ENCODE measurements at regions of chr5 and their contacts with region 1.

Region 1: DNA sequence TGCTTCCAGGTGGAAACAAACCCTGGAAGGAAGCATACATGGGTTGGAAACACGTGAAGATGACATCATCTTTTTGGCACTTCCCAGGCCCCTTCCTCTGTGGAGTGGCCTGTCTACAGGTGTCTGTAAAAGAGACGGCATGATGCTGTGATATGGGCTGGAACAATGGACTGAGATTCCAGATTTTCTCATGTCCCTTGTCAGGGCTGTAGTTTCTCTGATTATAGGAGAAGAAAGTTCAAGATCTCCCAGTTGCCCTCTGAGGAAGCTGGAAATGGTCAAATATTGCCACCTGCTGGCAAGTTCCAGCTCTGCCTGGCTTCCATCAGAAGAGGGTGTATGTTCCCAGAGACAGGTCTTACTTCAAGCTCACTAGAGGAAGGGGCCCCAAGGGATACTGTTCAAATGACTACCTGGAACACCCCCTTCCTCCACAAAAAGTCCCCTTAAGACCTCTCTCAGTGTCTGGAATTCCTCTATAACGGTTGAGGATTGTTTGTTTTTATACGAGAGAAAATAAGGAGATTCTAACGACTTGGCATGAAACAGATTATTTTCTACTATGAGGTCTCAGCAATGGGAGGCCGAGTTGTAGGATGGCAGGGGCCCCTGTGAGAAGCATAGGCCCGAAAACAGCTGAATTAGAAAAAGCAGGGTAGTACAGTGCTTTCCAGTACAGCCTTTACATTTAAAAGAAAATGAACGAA is 7.3 kb upstream of the ANXA6 start:
- DNase-seq: peak; percentile 50 to 85 (median 81)
- ATAC-seq: peak; percentile 96
- H3K4me3 ChIP-seq: no peak overlapping the region
- H3K4me3 Mint-ChIP-seq: peak overlapping the region in 1 of 10 donors; percentile 51
- H3K27ac ChIP-seq: no peak overlapping the region
- H3K27ac Mint-ChIP-seq: peak overlapping the region in 8 of 9 donors; percentile 20 to 87 (median 54)
- H3K4me1 ChIP-seq: peaks cover 0 to 8% of the 10 kb centered on the region in 2 donors
- H3K4me1 Mint-ChIP-seq: peaks cover 1 to 42% (median 28%) of the 10 kb centered on the region in 7 donors
- H3K27me3 ChIP-seq: no peaks in the 10 kb centered on the region
- H3K27me3 Mint-ChIP-seq: no peaks in the 10 kb centered on the region

Region 2: DNA sequence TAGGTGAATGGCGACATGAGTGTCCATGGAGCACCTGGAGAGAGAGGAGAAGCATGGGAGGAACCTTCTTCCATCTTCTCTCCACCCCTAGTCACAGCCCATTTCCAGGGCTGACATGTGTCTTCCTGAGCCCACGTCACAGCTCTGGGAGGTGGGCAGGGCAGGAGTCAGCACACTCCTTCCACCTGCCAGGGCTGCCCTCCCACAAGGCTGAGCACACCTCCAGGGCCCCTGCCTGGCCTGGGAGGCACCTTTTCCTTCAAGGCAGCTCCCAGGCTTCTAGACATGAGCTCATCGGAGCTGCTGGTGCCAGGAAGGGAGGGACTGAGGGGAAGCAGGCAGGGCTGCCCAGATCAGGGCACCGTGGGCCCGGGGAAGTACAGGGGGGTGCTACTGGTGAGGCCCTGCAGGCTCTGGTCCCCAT is 538.0 kb before region 1 on chr5:
- CTCF ChIA-PET with region 1: no interaction called
- POLR2A ChIA-PET with region 1: no interaction called
- intact Hi-C with region 1: no loop called
- DNase-seq: no peak
- ATAC-seq: no peak
- H3K4me3 ChIP-seq: no peak overlapping the region
- H3K4me3 Mint-ChIP-seq: peak overlapping the region in 1 of 10 donors; percentile 94
- H3K27ac ChIP-seq: no peak overlapping the region
- H3K27ac Mint-ChIP-seq: no peak overlapping the region
- H3K4me1 ChIP-seq: peaks cover 0 to 20% of the 10 kb centered on the region in 2 donors
- H3K4me1 Mint-ChIP-seq: peaks cover 13 to 25% (median 18%) of the 10 kb centered on the region in 7 donors
- H3K27me3 ChIP-seq: no peaks in the 10 kb centered on the region
- H3K27me3 Mint-ChIP-seq: peaks cover 0 to 40% (median 6%) of the 10 kb centered on the region in 5 donors

Region 3: GRCh38 chr5:150801117-150801927 is 363.5 kb before region 1 on chr5:
- CTCF ChIA-PET with region 1: no interaction called
- POLR2A ChIA-PET with region 1: no interaction called
- intact Hi-C with region 1: loop called in 1 of 2 experiments (anchors 1 kb)
- DNase-seq: peak in 7 of 9 donors; percentile 25 to 53 (median 43)
- ATAC-seq: peak; percentile 55
- H3K4me3 ChIP-seq: no peak overlapping the region
- H3K4me3 Mint-ChIP-seq: peak overlapping the region in 1 of 10 donors; percentile 18
- H3K27ac ChIP-seq: no peak overlapping the region
- H3K27ac Mint-ChIP-seq: no peak overlapping the region
- H3K4me1 ChIP-seq: no peaks in the 10 kb centered on the region
- H3K4me1 Mint-ChIP-seq: peaks cover 0 to 18% (median 5%) of the 10 kb centered on the region in 7 donors
- H3K27me3 ChIP-seq: no peaks in the 10 kb centered on the region
- H3K27me3 Mint-ChIP-seq: peaks cover 0 to 16% (median 5%) of the 10 kb centered on the region in 5 donors

Region 4: DNA sequence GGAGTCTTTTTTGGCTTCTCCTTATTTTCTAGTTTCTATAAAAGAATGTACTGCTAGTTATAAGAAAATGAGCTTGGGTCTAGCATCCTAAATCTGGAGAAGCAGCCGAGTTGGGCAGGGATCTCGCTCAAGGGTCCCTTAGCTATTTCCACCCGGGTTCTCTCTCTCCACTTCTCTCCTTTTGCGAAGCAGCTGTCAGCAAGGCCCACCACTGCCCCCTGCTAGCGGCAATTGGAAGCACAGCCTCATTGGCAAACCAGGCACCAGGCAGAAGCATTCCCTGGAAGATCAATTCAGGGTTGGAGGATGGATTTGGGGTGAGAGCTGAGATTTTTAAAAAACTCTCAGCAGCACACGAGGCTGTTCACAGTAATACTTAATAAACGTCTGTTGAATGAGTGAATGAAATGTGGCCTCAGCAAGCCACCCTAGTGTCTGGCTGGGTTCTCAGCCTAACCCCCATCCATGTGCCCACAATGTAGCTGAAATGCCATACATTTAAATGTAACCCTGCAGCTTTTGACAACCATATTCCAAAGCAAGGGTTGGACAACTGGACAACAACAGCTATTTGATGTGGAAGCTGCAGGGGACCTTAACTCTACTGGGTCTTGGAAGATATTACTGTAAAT is 49.4 kb before region 1 on chr5:
- CTCF ChIA-PET with region 1: interaction called, 403 read pairs
- POLR2A ChIA-PET with region 1: interaction called, 760 read pairs
- intact Hi-C with region 1: loop called in 1 of 2 experiments (anchors 2 kb)
- DNase-seq: peak; percentile 49 to 72 (median 67)
- ATAC-seq: peak; percentile 95
- H3K4me3 ChIP-seq: no peak overlapping the region
- H3K4me3 Mint-ChIP-seq: no peak overlapping the region
- H3K27ac ChIP-seq: no peak overlapping the region
- H3K27ac Mint-ChIP-seq: peak overlapping the region in 2 of 9 donors; percentile 58 to 59
- H3K4me1 ChIP-seq: no peaks in the 10 kb centered on the region
- H3K4me1 Mint-ChIP-seq: peaks cover 4 to 17% (median 12%) of the 10 kb centered on the region in 7 donors
- H3K27me3 ChIP-seq: no peaks in the 10 kb centered on the region
- H3K27me3 Mint-ChIP-seq: no peaks in the 10 kb centered on the region

Region 5: DNA sequence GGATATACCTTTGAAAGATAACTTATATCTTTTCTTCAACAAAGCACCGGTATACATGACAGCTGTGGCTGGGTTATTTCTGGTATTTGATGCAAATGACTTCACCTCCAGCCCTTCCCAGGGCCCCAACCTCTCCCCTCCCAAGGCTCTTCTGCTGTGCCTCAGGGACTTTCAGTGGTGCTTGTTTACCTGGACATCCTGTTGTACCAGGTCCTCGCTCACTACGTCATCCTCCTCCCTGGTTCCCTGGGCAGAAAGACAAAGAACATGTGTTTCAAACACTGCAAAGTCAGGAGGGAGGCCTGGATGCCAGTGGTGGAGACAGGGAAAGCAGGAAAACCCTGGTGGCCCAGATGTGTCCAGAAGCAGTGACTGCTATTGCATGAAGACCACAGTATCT is 30.6 kb before region 1 on chr5:
- CTCF ChIA-PET with region 1: interaction called, 403 read pairs
- POLR2A ChIA-PET with region 1: interaction called, 760 read pairs
- intact Hi-C with region 1: no loop called
- DNase-seq: no peak
- ATAC-seq: no peak
- H3K4me3 ChIP-seq: no peak overlapping the region
- H3K4me3 Mint-ChIP-seq: no peak overlapping the region
- H3K27ac ChIP-seq: peak overlapping the region; percentile 37
- H3K27ac Mint-ChIP-seq: peak overlapping the region in 8 of 9 donors; percentile 53 to 99 (median 84)
- H3K4me1 ChIP-seq: peaks cover 21 to 50% of the 10 kb centered on the region in 2 donors
- H3K4me1 Mint-ChIP-seq: peaks cover 65 to 98% (median 85%) of the 10 kb centered on the region in 7 donors
- H3K27me3 ChIP-seq: no peaks in the 10 kb centered on the region
- H3K27me3 Mint-ChIP-seq: no peaks in the 10 kb centered on the region

Region 6: GRCh38 chr5:151150471-151151262 is 14.2 kb before region 1 on chr5:
- CTCF ChIA-PET with region 1: interaction called, 43 read pairs
- POLR2A ChIA-PET with region 1: interaction called, 760 read pairs
- intact Hi-C with region 1: loop called (anchors 1 kb)
- DNase-seq: peak; percentile 39 to 93 (median 83)
- ATAC-seq: peak; percentile 89
- H3K4me3 ChIP-seq: peak overlapping the region; percentile 44
- H3K4me3 Mint-ChIP-seq: peak overlapping the region; percentile 70 to 97 (median 86)
- H3K27ac ChIP-seq: peak overlapping the region; percentile 92
- H3K27ac Mint-ChIP-seq: peak overlapping the region; percentile 91 to 99 (median 97)
- H3K4me1 ChIP-seq: peaks cover 93 to 99% of the 10 kb centered on the region in 2 donors
- H3K4me1 Mint-ChIP-seq: peaks cover 80 to 100% (median 96%) of the 10 kb centered on the region in 7 donors
- H3K27me3 ChIP-seq: no peaks in the 10 kb centered on the region
- H3K27me3 Mint-ChIP-seq: no peaks in the 10 kb centered on the region

Region 7: GRCh38 chr5:151239237-151239861 is 74.5 kb after region 1 on chr5:
- CTCF ChIA-PET with region 1: interaction called, 7 read pairs
- POLR2A ChIA-PET with region 1: no interaction called
- intact Hi-C with region 1: loop called (anchors 2 to 5 kb)
- DNase-seq: peak in 5 of 9 donors; percentile 44 to 60 (median 49)
- ATAC-seq: peak; percentile 77
- H3K4me3 ChIP-seq: no peak overlapping the region
- H3K4me3 Mint-ChIP-seq: peak overlapping the region in 1 of 10 donors; percentile 60
- H3K27ac ChIP-seq: no peak overlapping the region
- H3K27ac Mint-ChIP-seq: peak overlapping the region in 2 of 9 donors; percentile 68 to 78
- H3K4me1 ChIP-seq: peaks cover 5 to 15% of the 10 kb centered on the region in 2 donors
- H3K4me1 Mint-ChIP-seq: peaks cover 8 to 42% (median 21%) of the 10 kb centered on the region in 7 donors
- H3K27me3 ChIP-seq: no peaks in the 10 kb centered on the region
- H3K27me3 Mint-ChIP-seq: no peaks in the 10 kb centered on the region

Region 8: GRCh38 chr5:151315998-151316597 is 151.3 kb after region 1 on chr5:
- CTCF ChIA-PET with region 1: no interaction called
- POLR2A ChIA-PET with region 1: no interaction called
- intact Hi-C with region 1: loop called in 1 of 2 experiments (anchors 10 kb)
- DNase-seq: peak in 6 of 9 donors; percentile 6 to 55 (median 11)
- ATAC-seq: peak; percentile 75
- H3K4me3 ChIP-seq: no peak overlapping the region
- H3K4me3 Mint-ChIP-seq: no peak overlapping the region
- H3K27ac ChIP-seq: no peak overlapping the region
- H3K27ac Mint-ChIP-seq: no peak overlapping the region
- H3K4me1 ChIP-seq: no peaks in the 10 kb centered on the region
- H3K4me1 Mint-ChIP-seq: no peaks in the 10 kb centered on the region
- H3K27me3 ChIP-seq: no peaks in the 10 kb centered on the region
- H3K27me3 Mint-ChIP-seq: peaks cover 0 to 14% (median 6%) of the 10 kb centered on the region in 5 donors

Measured in naive thymus-derived CD4-positive, alpha-beta T cell (primary cell).